Posterior vena cava (tissue), 2 donors: ENCODE measurements at regions of chr5 and their contacts with region 1.

Region 1: GRCh38 chr5:95486191-95486590 is 68.6 kb downstream of the SKIC3 start:
- DNase-seq: no peak

Region 2: GRCh38 chr5:95284830-95285721 is 201.1 kb before region 1 on chr5 and contains the start of gene MCTP1:
- intact Hi-C with region 1: loop called in 1 of 2 experiments (anchors 5 kb)
- DNase-seq: no peak
- total RNA-seq, gene MCTP1: 23.8 to 38.9 TPM